Head of caudate nucleus (tissue), 42 donors: ENCODE measurements at regions of chr2 and their contacts with region 1.

Region 1: DNA sequence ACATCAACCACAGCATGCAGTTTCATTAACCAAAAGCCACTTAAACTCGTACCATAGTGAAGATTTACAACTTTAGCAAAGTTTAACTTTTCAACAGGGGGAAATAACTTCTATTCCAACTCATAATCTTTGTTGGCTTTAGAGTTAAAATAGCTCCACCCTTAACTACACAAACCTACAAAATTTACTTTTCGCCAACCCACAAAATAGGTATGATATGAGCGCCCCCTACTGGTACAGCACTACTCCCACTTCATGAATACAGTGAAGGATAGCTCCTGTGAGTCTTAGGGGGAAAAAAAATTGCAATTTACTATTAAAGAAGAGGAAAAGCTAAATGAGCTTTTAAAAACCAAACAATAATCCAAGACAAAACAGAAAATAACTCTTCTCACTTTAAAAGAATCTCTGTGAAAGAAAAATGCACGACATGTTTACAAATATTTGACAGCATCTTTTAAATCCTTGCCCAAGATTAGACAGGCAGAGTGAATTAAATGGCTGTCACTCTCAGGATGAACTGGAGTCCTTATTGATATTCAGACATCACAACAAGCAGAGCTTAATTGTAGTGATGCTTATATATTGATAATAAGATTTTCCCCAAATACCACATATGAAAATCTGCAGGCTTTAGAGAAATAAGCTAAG is 32.2 kb downstream of the TMEFF2 start:
- DNase-seq: peak in 38 of 42 donors; percentile 18 to 92 (median 76)

Region 2: DNA sequence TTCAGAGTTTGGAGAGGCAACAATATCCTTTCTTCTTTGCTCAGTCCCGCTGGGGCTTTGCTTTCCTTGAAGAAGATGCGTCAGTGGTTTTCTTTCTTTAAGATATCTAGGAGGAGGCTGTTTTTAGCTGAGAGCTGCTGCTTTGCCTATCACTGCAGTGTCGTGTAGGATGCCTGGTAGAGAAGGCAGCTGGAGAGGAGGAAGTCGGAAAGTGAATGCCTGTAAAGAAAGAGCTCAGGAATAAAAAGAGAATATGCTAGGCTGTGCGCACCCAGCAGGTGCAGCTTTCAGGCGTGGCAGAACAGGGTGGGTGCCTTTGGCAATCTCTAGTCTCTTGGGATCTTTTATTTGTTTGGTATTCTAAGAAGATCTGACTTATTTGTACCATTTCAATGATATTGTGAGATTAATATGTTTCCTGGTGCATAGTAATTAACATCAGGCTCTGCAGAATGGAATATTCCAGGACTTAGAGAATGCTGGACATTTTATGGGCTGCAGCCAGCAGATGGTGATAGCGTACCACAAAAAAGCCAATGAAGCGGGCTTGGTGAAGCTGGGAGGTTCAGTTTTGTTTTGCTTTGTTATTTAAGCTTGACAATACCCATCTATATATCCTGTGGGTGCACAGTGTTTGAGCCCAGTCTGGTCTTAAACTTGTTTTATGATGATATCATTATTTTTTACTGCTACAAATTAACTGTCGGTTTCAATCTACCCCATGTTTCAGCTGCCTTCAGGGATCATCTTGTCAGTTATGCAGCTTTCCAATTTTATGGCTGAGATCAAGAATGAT is 350.5 kb before region 1 on chr2:
- intact Hi-C with region 1: loop called (anchors 2 kb)
- DNase-seq: peak; percentile 40 to 90 (median 78)

Region 3: DNA sequence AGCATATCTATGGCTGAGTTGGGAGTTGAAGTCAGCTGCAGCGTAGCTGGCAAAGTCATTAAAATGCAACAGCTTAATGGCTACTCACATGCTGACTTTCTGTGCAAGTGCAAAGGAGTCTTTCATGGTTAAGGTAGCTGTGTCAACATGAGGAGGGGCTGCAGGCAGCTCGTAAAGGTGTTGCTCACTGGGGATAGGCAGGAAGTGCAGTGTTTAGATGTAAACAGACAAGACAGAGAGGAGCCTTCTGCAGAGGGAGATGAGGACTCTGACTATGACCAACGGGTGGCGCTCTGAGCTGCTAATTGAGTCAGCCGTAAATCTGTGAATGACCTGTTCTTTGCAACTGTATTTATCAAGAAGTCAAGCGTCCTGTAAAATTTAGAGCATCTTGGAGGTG is 293.3 kb before region 1 on chr2:
- intact Hi-C with region 1: loop called (anchors 10 kb)
- DNase-seq: peak in 38 of 42 donors; percentile 19 to 83 (median 54)

Region 4: GRCh38 chr2:192016265-192016664 is 146.3 kb before region 1 on chr2:
- intact Hi-C with region 1: no loop called
- DNase-seq: no peak